Left ventricle myocardium inferior (tissue), 1 donor: ENCODE measurements at regions of chr16 and their contacts with region 1.

Region 1: GRCh38 chr16:87636072-87636684 is 33.9 kb downstream of the JPH3 start:
- DNase-seq: peak; percentile 84
- H3K4me3 ChIP-seq: peak overlapping the region; percentile 54
- H3K27ac ChIP-seq: no peak overlapping the region
- H3K4me1 ChIP-seq: peaks cover 15% of the 10 kb centered on the region
- H3K27me3 ChIP-seq: peaks cover 68% of the 10 kb centered on the region
- CTCF ChIP-seq: peak; percentile 79

Region 2: DNA sequence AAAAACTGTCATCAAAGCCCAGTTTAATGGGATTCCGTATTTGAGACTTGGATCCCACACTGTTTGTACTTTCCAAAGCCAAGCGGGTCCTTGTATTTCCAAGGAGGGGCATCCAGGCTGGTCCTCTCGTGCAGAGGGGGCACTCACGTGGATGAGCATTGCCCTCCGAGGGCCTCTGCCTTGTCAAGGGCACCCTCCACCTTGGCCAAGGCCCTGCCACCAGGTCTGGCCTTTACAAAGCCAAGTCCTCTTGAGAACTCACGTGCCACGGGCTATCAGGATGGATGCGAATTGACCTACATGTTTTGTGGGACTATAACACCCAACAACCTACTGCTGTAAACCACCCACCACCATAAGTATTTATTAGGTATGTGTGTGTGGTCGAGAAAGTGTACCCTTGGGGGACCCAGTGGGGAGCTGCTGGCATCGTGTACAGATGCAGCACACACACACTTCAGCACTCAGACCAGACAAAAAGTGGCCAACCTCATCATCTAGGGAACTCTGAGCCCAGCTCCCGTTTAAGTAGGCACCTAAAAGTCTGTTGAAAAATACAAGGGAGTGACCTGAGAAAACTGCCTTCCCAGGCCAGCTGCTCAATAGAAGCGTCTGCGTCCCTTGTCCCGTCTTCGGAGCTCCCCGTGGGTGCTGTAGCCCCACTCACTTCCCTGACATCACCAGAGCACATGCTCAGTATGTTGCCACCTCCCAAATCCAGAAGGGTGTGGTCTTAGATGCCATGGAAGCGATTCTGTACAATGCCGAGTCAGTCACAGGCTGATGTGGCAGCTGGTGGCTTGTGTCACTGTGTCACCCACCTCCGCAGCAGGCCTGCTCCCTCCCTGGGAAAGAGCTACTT is 231.2 kb before region 1 on chr16:
- intact Hi-C with region 1: no loop called
- DNase-seq: peak; percentile 12
- H3K4me3 ChIP-seq: no peak overlapping the region
- H3K27ac ChIP-seq: no peak overlapping the region
- H3K4me1 ChIP-seq: peaks cover 8% of the 10 kb centered on the region
- H3K27me3 ChIP-seq: no peaks in the 10 kb centered on the region
- CTCF ChIP-seq: no peak

Region 3: DNA sequence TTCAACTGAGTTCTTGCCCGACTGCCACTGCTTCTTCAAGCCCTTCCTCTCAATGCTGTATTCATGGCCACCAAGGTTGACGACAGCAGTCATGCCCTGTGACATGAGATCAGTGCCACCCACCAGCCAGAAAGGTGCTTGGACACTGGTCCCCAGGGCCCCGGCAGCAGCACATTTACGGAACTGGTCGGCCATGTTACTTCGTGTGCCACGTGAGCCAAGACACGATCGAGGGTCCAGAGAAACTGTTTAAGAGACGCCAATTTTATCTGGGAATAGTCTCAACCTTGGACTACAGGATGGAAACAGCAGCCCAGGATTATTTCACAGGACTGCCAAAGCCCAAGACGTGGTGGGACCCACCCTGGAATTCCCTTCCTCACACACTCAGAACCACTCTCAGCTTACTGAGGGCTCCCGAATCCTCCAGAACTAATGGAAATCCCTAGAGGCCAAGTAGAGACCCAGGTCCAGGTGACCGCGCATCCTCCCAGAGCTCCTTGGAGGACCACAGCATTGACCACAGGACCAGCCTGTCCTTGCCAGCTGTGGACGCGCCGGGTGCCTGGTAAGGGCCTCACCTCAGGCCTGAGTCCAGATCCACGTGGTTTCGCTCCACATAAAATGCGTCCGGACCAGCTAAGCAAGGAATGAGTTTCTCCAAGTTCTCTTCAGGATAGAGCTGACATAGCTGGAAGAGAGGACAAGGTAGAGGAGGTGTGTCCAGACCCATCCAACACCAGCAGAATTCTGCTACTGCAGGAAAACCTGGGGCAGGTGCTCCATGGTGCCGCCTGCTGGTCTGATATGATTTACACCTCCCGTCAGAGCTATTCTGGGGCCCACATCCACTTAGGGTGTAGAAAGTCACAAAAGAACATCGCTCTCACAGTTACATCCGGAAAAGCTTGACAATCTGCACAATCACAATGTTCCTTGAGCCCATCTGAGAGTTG is 215.9 kb before region 1 on chr16:
- intact Hi-C with region 1: loop called (anchors 10 kb)
- DNase-seq: no peak
- H3K4me3 ChIP-seq: no peak overlapping the region
- H3K27ac ChIP-seq: no peak overlapping the region
- H3K4me1 ChIP-seq: peaks cover 6% of the 10 kb centered on the region
- H3K27me3 ChIP-seq: no peaks in the 10 kb centered on the region
- CTCF ChIP-seq: no peak

Region 4: DNA sequence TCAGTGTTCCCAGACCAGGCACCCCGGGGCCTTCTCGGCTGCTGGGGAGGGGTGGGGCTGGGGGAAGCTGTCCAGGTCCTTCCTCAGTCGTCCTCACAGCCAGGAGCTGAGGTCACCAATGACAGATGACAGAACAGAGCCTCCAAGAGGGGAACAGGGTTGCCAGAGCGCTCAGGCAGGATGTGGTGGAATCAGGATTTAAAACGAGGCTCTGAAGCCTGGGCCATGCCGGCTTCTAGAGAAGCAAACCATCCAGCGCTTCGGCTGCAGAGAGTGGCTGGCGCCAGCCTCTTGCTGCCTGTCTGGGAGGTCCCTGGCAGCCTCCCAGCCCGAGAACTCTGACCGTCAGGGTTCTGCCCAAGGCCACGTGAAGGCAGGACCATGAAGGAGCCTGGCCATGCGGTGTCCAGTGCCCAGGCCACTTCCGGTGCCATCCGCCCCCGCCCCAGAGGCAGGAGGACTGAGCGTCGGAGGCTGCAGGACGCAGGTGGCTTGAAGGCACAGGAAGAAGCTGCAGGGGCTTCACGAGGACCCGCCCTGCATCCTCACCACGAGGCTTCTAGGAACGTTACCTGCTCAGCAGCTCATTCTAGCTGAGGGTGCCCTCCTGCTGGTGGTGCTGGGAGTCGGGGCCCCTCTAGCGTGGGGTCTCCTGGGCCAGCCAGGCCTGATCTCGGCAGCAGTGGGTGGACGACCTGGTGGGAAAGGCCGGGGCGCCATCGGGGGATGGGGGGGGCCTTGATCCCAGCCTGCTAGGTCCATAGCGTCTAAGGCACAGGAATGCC is 51.1 kb after region 1 on chr16:
- intact Hi-C with region 1: no loop called
- DNase-seq: no peak
- H3K4me3 ChIP-seq: no peak overlapping the region
- H3K27ac ChIP-seq: no peak overlapping the region
- H3K4me1 ChIP-seq: peaks cover 10% of the 10 kb centered on the region
- H3K27me3 ChIP-seq: peaks cover 87% of the 10 kb centered on the region
- CTCF ChIP-seq: no peak